Kidney (tissue), 22 donors: ENCODE measurements at regions of chr7 and their contacts with region 1.

Region 1: DNA sequence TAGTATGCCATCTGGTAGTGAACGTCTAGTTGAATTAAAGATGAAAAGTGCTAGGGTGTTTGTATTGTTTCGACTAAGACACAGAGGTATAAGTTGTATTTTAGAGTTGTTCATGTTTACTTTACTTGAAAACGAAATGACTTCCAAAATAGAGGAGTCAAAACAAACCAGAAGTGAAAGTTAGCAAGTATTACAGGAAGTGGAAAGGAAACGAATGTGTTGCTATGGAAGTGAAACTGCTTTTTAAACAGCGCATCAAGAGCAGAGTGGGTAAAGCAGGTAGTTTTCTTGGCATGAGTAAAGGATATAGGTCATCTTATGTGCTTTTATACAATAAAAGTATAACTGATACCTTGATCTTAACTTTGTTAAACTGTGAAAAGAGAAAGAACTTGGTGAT is 20.0 kb upstream of the GALNTL5 start:
- DNase-seq: peak in 1 of 5 donors; percentile 22
- H3K4me3 ChIP-seq: no peak overlapping the region
- H3K27ac ChIP-seq: no peak overlapping the region
- H3K4me1 ChIP-seq: no peaks in the 10 kb centered on the region
- H3K27me3 ChIP-seq: no peaks in the 10 kb centered on the region
- CTCF ChIP-seq: no peak

Region 2: GRCh38 chr7:151782598-151783448 is 153.4 kb before region 1 on chr7:
- intact Hi-C with region 1: loop called (anchors 10 kb)
- DNase-seq: peak; percentile 75 to 92 (median 83)
- H3K4me3 ChIP-seq: peak overlapping the region in 2 of 3 donors; percentile 36 to 49
- H3K27ac ChIP-seq: peak overlapping the region in 1 of 2 donors; percentile 7
- H3K4me1 ChIP-seq: peaks cover 0 to 6% (median 0%) of the 10 kb centered on the region in 3 donors
- H3K27me3 ChIP-seq: no peaks in the 10 kb centered on the region
- CTCF ChIP-seq: peak; percentile 76